ENCODE measurements at regions of chr5 and their contacts with region 1.

Region 1: DNA sequence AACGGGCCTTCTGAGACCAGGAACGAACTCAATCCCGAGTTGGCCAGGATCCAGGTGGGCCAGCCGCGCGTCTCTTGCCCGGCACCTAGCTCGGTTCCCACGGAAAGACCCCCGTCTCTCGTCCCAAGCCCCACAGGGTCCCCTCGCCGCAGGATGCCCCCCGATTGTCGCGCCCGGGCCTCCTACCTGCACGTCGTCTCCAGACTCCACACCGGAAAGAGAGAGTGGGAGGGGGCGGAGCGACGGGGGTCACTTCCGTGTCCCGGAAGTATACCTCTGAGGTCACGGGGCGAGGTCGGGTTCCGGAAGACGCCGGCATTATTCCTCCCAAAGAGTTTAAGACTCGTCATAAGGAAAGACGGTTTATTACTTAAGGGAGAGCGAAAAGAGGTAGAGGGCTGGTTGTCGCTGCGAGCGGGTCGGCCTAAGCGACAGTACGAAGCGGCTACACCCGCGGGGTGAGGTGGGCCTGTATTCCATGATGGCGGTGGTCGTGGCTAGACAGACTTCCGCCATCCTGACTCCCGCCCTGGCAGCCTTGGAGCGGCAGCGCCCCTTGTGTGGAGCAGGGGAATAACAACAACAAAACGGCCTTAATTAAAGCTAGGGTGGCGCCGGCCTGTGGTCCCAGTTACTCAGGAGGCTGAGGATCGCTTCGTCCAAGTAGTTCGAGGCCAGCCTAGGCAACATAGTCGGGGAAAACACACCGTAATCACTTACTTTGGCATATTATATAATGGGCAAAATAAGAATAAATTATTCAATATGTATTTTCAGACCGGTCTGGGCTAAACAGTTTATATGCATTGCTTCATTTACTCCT is at the start of gene RPS14:
- DNase-seq: peak; percentile 89 to 92
- ATAC-seq: peak; percentile 97
- H3K4me3 ChIP-seq: peak within 1 kb of the TSS; percentile 70 to 97 (median 86)
- H3K27ac ChIP-seq: peak within 1 kb of the TSS; percentile 92 to 95 (median 94)
- H3K4me1 ChIP-seq: peaks cover 13 to 17% of the 10 kb centered on the region in 2 donors
- H3K27me3 ChIP-seq: no peaks in the 10 kb centered on the region
- CTCF ChIP-seq: peak; percentile 85 to 96 (median 93)
- POLR2A ChIP-seq: peak; percentile 83 to 88
- total RNA-seq, gene RPS14: 1,865 to 2,215 (median 2,024) TPM

Region 2: GRCh38 chr5:150544611-150545219 is 95.0 kb after region 1 on chr5:
- in situ Hi-C with region 1: loop called in 1 of 4 experiments (anchors 5 kb)
- intact Hi-C with region 1: no loop called
- DNase-seq: peak; percentile 27 to 60
- ATAC-seq: peak; percentile 54 to 72
- H3K4me3 ChIP-seq: no peak overlapping the region
- H3K27ac ChIP-seq: peak overlapping the region in 1 of 4 donors; percentile 18
- H3K4me1 ChIP-seq: peaks cover 0 to 11% of the 10 kb centered on the region in 2 donors
- H3K27me3 ChIP-seq: no peaks in the 10 kb centered on the region
- CTCF ChIP-seq: peak; percentile 68 to 92 (median 89)
- POLR2A ChIP-seq: no peak

Region 3: DNA sequence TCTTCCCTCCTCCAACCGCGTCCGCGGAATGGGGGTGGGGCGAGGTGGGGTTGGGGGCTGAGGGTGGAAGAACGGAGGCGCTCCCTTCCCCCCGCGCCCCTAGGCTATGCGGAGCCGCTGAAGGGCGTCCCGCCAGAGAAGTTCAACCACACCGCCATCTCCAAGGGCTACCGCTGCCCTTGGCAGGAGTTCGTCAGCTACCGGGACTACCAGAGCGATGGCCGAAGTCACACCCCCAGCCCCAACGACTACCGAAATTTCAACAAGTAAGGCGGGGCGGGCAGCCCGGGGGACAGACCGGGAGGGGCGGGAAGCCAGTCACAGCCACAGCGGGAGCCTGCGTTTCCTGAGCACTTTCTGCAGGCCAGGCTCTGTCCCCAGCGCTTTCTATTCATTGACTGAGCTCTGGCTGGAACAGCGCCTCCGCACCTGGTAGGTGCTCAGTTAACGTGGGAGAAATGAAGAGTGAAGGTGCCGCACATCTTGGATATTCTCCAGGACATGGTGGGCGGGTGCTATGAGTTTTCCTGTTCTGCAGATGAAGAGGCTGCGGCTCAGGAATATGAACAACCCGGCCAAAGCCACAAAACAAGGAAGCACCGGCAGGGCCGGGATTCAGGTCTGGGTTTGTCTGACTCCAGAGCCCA is 222.6 kb after region 1 on chr5:
- in situ Hi-C with region 1: no loop called
- intact Hi-C with region 1: loop called (anchors 10 kb)
- DNase-seq: peak in 1 of 2 donors; percentile 49
- ATAC-seq: peak in 1 of 2 donors; percentile 15
- H3K4me3 ChIP-seq: peak overlapping the region; percentile 52 to 56 (median 56)
- H3K27ac ChIP-seq: peak overlapping the region; percentile 82 to 97 (median 92)
- H3K4me1 ChIP-seq: peaks cover 51 to 66% of the 10 kb centered on the region in 2 donors
- H3K27me3 ChIP-seq: no peaks in the 10 kb centered on the region
- CTCF ChIP-seq: no peak
- POLR2A ChIP-seq: no peak

Measured in gastrocnemius medialis (tissue), 4 donors.